HepG2 (cell line): ENCODE measurements at regions of chr1 and their contacts with region 1.

Region 1: DNA sequence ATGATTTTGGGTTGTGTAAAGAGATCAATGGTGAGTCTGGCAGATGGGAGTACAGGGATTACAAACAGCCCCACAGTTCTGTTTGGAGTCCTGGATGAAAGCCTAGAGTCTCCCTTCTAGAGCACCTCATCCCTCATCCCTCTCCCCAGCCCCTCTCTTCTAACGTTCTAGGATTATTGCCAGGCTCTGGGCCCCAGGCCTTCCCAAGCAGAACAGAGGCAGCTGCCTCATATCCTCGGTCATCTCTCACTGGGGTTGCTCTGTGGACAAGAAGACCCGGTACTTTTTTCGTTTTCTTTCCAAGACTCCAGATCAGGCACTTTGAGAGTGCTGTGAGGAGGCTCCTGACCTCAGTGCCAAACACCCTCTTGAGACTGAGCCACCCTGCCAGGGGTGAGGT is 16.9 kb upstream of the KCND3 start:
- DNase-seq: no peak
- ATAC-seq: no peak
- H3K4me3 ChIP-seq: no peak overlapping the region
- H3K27ac ChIP-seq: no peak overlapping the region
- H3K4me1 ChIP-seq: no peaks in the 10 kb centered on the region
- H3K27me3 ChIP-seq: no peaks in the 10 kb centered on the region
- CTCF ChIP-seq: no peak
- EP300 ChIP-seq: no peak
- POLR2A ChIP-seq: no peak
- RAD21 ChIP-seq: no peak

Region 2: DNA sequence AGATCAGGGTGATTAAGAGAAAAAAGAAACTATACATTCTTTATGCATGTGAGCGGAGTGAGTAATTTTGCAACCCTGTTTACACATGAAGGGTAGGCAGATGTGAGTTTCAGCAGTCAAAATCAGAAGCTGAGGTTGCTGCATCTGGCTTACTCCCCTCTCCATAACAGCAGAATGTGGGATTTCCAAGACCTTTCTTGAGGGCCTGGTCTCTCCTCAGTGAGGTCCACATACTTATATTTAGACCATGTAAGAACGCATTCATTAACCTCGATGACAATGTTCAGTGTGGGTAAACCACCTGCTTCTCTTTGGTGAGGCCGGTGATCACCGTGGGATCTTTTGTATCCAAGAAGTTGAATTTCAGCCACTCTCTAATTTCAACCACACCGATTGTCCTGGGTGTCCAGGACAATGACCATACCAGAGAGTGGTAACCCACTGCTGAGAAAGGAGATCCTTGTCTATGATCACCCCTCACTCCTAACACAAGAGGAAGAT is 405.5 kb before region 1 on chr1:
- CTCF ChIA-PET with region 1: no interaction called
- POLR2A ChIA-PET with region 1: no interaction called
- in situ Hi-C with region 1: no loop called
- intact Hi-C with region 1: no loop called
- DNase-seq: no peak
- ATAC-seq: no peak
- H3K4me3 ChIP-seq: no peak overlapping the region
- H3K27ac ChIP-seq: no peak overlapping the region
- H3K4me1 ChIP-seq: peaks cover 40% of the 10 kb centered on the region
- H3K27me3 ChIP-seq: peaks cover 0 to 4% of the 10 kb centered on the region in 2 experiments; a peak in 2 of 5 replicates
- CTCF ChIP-seq: no peak
- EP300 ChIP-seq: no peak
- POLR2A ChIP-seq: no peak
- RAD21 ChIP-seq: no peak

Region 3: GRCh38 chr1:111895469-111896082 is 110.8 kb before region 1 on chr1:
- CTCF ChIA-PET with region 1: no interaction called
- POLR2A ChIA-PET with region 1: no interaction called
- in situ Hi-C with region 1: no loop called
- intact Hi-C with region 1: no loop called
- DNase-seq: no peak
- ATAC-seq: no peak
- H3K4me3 ChIP-seq: no peak overlapping the region
- H3K27ac ChIP-seq: no peak overlapping the region
- H3K4me1 ChIP-seq: no peaks in the 10 kb centered on the region
- H3K27me3 ChIP-seq: 0 out of 5 replicates have a peak, but pooled peaks cover 1 to 2% of the 10 kb centered on the region in 2 experiments
- CTCF ChIP-seq: no peak
- EP300 ChIP-seq: no peak
- POLR2A ChIP-seq: no peak
- RAD21 ChIP-seq: no peak

Region 4: DNA sequence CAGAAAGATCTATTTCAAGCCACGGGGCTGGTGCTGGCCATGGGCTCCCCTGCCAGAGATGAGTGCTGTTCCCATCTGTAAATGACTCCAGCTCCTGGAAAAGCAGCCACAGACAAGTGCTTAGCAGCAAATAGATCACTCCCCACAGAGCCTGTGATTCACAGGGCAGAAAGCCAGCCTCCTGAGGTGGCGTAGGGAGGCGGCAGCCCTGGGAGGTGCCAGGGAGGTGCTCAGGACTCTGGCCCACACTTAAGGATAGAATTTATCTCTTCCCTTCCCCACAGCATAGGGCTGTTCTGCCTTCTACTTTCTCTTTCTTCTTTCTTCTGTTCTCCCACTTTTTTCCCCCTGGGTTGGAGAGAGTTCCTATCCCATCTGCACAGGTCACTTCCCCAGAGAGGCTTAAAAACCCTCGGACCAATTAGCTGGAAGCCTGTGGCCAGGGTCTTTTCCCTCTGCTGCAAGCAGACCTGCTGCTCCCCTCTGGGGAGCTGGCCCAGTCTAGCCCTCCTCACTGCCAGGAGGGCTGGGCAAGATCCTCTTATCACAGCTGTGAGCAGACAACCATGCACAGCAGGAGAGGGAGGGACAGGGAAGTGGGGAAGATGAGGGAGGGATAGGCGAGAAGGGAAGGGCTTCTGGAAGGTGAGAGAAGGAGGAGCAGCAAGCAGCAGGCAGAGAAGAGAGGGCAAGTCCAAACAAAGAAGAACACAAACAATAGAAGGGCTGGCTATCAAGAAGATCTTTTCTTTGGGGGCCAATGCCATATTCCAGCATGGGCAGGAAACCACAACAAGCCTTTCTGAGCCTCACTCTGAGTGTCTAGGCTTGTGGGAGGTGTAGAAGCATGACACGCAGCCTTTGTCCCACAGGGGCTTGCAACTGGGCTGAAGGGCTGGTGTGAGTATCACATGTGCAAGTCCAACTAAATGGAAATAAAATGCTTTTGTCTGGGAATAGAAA is 57.9 kb before region 1 on chr1:
- CTCF ChIA-PET with region 1: no interaction called
- POLR2A ChIA-PET with region 1: no interaction called
- in situ Hi-C with region 1: no loop called
- intact Hi-C with region 1: loop called (anchors 10 kb)
- DNase-seq: no peak
- ATAC-seq: no peak
- H3K4me3 ChIP-seq: no peak overlapping the region
- H3K27ac ChIP-seq: no peak overlapping the region
- H3K4me1 ChIP-seq: no peaks in the 10 kb centered on the region
- H3K27me3 ChIP-seq: peaks cover 0 to 4% of the 10 kb centered on the region in 2 experiments; a peak in 2 of 5 replicates
- CTCF ChIP-seq: no peak
- EP300 ChIP-seq: no peak
- POLR2A ChIP-seq: no peak
- RAD21 ChIP-seq: no peak